ENCODE measurements at regions of chr5 and their contacts with region 1.

Region 1: DNA sequence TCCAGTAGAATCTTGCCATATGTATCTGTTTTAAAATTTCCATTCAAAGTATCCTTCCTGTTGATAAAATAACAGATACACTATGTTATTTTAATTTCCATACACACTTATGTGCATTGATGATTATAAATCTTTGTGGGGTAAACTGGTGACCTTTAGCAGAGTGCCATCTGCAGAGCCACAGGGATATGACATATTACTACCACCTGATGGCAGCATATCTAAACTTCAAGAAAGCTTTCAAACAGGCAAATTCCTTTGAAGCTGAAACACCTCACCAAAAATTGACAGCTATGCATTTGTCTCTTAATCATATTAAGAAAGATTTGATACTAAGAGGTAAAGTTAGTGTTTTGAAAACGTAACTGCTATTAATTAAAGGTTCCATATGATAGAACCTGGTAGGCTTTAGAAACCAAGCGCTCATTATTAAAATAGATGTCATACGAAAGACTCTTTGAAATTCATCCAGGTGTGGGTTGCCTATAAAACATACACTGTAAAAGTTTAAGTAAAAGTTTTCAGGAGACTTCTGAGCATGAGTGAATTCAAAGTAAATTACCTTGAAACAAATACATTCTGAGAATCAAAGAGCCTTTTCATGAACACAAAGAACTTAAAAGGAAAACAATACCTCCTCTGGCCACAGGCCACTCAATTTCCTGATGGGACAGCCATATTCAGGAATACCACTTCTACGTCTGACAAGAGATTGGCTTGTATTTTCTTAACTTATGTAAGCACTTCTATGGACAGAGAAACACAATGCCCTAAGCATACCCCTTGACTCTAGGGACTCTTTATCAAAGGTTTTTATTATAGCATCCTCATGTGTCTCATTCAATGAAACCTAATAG is 93.3 kb downstream of the KIAA0825 start:
- DNase-seq: peak; percentile 50
- H3K4me3 ChIP-seq: no peak overlapping the region
- H3K27ac ChIP-seq: no peak overlapping the region
- H3K4me1 ChIP-seq: no peaks in the 10 kb centered on the region
- H3K27me3 ChIP-seq: no peaks in the 10 kb centered on the region
- CTCF ChIP-seq: peak; percentile 73

Region 2: DNA sequence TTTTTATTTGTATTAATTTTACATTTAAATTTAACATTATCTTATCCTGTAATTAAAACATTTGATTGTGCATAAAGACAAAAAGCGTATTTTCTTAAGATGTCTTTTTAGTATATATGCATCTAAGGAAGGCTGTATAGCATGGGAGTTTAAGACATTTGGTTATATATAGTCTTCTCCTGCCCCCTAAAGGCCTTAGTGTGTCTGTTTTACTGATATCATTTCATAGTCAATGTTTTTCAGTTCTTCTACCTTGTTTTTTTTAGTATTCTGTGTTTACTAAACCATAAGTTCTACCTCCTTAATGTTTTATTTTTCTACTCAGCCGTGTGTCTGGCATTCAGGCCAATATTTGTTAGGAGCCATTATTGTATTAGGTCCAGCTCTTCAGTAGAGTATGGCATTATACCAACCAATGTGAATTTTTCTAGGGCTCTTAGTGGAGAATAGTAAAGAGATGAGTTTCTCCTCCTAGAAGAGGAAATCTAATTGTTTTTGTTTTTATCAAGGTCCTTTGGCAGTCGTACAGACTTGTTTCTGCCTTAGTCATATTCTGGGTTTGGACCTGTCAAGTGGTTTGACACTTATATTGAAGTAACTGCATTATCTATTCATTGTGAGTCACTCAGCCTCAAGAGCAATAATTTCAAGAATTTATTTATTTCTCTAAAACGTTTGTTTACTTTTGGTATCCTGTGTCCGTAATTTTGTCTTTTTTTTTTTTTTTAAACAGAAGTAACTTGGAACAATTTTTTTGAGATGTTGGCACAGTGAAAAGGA is 168.2 kb after region 1 on chr5:
- CTCF ChIA-PET with region 1: no interaction called
- POLR2A ChIA-PET with region 1: no interaction called
- intact Hi-C with region 1: loop called (anchors 1 kb)
- DNase-seq: peak; percentile 59
- H3K4me3 ChIP-seq: no peak overlapping the region
- H3K27ac ChIP-seq: no peak overlapping the region
- H3K4me1 ChIP-seq: peaks cover 18% of the 10 kb centered on the region
- H3K27me3 ChIP-seq: no peaks in the 10 kb centered on the region
- CTCF ChIP-seq: peak; percentile 59

Region 3: DNA sequence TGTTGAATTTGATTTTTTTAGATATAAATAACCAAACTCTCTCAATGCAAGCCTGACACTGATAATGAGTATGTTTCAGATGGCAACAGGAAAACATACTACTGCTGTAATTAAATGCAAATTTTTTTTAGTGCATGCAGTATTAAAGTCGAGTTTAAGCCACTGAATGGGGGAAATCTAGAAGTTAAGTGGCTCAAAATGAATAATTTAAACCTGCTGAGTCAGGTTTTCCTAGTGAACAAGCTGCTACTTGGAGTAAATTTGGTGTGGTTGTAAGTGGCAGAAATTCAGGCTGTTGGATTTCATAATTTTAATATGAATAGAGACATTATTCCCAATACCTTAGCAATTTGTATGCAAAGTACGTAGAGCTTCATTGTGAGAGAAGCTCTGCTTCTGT is 215.2 kb after region 1 on chr5:
- CTCF ChIA-PET with region 1: interaction called, 10 read pairs
- POLR2A ChIA-PET with region 1: no interaction called
- intact Hi-C with region 1: loop called (anchors 5 kb)
- DNase-seq: peak; percentile 40
- H3K4me3 ChIP-seq: no peak overlapping the region
- H3K27ac ChIP-seq: no peak overlapping the region
- H3K4me1 ChIP-seq: peaks cover 6% of the 10 kb centered on the region
- H3K27me3 ChIP-seq: no peaks in the 10 kb centered on the region
- CTCF ChIP-seq: no peak

Region 4: DNA sequence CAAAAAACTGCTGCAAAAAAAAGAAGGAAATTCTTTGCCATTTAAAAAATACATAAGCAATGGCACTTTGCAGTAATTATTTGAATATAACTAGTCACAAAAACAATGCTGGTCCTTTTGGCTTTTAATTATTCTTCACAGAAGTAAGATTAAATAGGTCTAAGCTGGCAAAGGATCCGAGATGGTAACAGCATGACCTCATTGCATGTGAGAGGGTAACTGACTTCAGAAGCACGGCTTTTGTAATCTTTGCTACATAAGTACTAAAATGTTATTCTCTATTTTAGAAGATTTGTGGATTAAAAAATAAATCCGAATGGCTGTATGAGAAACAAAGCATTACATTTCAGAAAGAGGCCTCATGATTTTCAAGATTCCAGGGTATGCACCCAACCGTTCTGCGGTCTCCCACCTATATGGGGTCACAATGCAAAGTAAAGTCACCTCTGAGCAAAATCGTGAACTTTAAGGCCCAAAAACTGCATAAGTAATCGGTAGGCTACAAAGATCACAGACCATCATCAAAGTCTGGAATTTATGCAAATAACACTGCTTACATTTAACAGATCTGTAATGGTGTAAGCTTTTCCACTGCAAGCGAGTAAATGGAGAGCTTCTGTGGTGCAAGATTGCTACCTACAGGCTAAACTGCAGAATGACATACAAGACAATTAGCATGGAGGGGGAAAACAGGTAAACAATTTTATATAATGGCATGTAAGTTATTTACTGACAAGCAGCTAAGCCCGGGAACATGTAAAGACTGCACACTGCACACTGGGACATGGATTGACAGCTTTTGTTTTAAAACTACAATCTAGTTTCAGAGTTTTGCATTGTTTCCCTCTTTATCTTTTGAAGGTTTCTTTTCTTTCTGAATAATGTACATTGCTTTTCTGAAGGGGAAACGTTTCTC is 325.0 kb after region 1 on chr5:
- CTCF ChIA-PET with region 1: no interaction called
- POLR2A ChIA-PET with region 1: no interaction called
- intact Hi-C with region 1: loop called (anchors 2 kb)
- DNase-seq: peak; percentile 66
- H3K4me3 ChIP-seq: no peak overlapping the region
- H3K27ac ChIP-seq: no peak overlapping the region
- H3K4me1 ChIP-seq: no peaks in the 10 kb centered on the region
- H3K27me3 ChIP-seq: no peaks in the 10 kb centered on the region
- CTCF ChIP-seq: peak; percentile 75

Region 5: DNA sequence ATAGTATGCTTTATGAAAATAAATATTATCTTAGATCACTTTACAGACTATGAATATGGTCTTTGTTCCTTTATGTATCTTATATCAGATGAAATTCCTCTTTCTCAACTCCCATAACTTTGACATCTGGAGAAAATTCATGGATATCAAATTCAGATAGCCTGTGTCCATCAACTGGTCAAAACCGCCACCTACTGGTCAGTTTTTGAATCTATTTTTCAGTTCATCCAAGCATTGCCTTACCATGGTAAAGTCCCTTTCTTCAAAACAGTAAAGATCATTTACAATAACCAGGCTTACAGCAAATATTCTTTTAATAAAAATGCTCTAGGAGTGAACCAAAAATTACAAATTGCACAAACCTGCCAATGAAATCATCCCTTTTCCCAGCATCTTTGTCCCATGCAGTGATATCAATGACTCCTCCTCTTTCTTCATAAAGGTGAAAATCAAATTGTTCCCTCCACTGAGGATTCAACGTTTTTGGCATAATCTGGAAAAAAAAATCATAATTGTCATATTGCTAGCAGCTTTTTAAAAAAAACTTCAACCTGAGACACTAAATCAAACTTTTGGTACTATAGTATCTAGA is 383.9 kb after region 1 on chr5:
- CTCF ChIA-PET with region 1: no interaction called
- POLR2A ChIA-PET with region 1: no interaction called
- intact Hi-C with region 1: loop called (anchors 10 kb)
- DNase-seq: peak; percentile 54
- H3K4me3 ChIP-seq: no peak overlapping the region
- H3K27ac ChIP-seq: no peak overlapping the region
- H3K4me1 ChIP-seq: no peaks in the 10 kb centered on the region
- H3K27me3 ChIP-seq: no peaks in the 10 kb centered on the region
- CTCF ChIP-seq: peak; percentile 77

Region 6: GRCh38 chr5:95901676-95902627 is 1376.9 kb after region 1 on chr5:
- CTCF ChIA-PET with region 1: no interaction called
- POLR2A ChIA-PET with region 1: no interaction called
- intact Hi-C with region 1: no loop called
- DNase-seq: peak; percentile 12
- H3K4me3 ChIP-seq: no peak overlapping the region
- H3K27ac ChIP-seq: no peak overlapping the region
- H3K4me1 ChIP-seq: no peaks in the 10 kb centered on the region
- H3K27me3 ChIP-seq: no peaks in the 10 kb centered on the region
- CTCF ChIP-seq: no peak